ENCODE measurements at regions of chr9 and their contacts with region 1.

Region 1: GRCh38 chr9:34646211-34647083 is at the start of gene GALT:
- DNase-seq: peak; percentile 98
- ATAC-seq: peak; percentile 84
- H3K4me3 Mint-ChIP-seq: peak within 1 kb of the TSS; percentile 94
- H3K27ac Mint-ChIP-seq: peak within 1 kb of the TSS; percentile 91
- H3K4me1 Mint-ChIP-seq: peaks cover 17% of the 10 kb centered on the region
- H3K27me3 Mint-ChIP-seq: no peaks in the 10 kb centered on the region
- total RNA-seq, gene GALT: 119 to 127 TPM

Region 2: DNA sequence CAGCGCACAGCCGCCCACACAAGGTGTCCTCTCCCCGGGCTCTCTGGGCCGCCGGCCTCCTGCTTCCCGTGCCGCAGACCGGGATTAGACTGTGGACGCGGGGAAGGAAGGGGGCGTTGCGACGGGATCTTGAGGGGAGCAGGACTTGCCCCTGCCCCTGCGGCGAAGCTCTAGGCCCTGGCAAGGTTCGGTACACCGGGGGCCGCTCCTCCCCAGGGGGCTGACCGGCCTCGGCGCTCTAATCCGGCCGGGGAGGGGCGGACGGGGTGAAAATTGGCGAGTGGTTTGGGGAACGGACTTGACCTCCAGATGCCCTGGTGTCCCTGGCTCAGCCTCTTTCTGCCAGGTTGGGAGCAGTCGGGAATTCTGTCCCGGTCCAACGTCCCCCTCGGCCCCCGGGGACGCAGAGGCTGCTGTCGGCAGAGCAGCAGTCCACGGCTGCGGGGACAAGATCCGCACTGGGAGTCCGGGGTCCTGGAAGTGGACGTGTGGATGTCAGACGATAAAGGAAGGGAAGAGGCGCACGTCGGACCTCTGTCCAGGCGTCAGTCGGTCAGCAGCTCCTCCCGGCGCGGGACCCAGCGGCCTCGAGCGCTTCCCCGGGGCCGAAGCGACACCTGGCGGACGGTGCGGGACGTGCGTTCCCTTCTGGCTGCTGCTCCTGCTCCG is 55.1 kb before region 1 on chr9:
- POLR2A ChIA-PET with region 1: no interaction called
- DNase-seq: peak; percentile 89
- ATAC-seq: peak; percentile 70
- H3K4me3 Mint-ChIP-seq: peak overlapping the region; percentile 66
- H3K27ac Mint-ChIP-seq: no peak overlapping the region
- H3K4me1 Mint-ChIP-seq: peaks cover 20% of the 10 kb centered on the region
- H3K27me3 Mint-ChIP-seq: peaks cover 73% of the 10 kb centered on the region

Region 3: GRCh38 chr9:34620061-34620994 is 26.1 kb before region 1 on chr9 and contains the start of gene DCTN3:
- POLR2A ChIA-PET with region 1: interaction called, 17 read pairs
- DNase-seq: peak; percentile 83
- ATAC-seq: peak; percentile 98
- H3K4me3 Mint-ChIP-seq: peak within 1 kb of the TSS; percentile 94
- H3K27ac Mint-ChIP-seq: peak within 1 kb of the TSS; percentile 83
- H3K4me1 Mint-ChIP-seq: peaks cover 20% of the 10 kb centered on the region
- H3K27me3 Mint-ChIP-seq: peaks cover 31% of the 10 kb centered on the region
- total RNA-seq, gene DCTN3: 121 to 122 TPM

Region 4: GRCh38 chr9:34659592-34660535 is 13.4 kb after region 1 on chr9:
- POLR2A ChIA-PET with region 1: interaction called, 47 read pairs
- DNase-seq: no peak
- ATAC-seq: no peak
- H3K4me3 Mint-ChIP-seq: no peak overlapping the region
- H3K27ac Mint-ChIP-seq: no peak overlapping the region
- H3K4me1 Mint-ChIP-seq: peaks cover 27% of the 10 kb centered on the region
- H3K27me3 Mint-ChIP-seq: no peaks in the 10 kb centered on the region

Region 5: DNA sequence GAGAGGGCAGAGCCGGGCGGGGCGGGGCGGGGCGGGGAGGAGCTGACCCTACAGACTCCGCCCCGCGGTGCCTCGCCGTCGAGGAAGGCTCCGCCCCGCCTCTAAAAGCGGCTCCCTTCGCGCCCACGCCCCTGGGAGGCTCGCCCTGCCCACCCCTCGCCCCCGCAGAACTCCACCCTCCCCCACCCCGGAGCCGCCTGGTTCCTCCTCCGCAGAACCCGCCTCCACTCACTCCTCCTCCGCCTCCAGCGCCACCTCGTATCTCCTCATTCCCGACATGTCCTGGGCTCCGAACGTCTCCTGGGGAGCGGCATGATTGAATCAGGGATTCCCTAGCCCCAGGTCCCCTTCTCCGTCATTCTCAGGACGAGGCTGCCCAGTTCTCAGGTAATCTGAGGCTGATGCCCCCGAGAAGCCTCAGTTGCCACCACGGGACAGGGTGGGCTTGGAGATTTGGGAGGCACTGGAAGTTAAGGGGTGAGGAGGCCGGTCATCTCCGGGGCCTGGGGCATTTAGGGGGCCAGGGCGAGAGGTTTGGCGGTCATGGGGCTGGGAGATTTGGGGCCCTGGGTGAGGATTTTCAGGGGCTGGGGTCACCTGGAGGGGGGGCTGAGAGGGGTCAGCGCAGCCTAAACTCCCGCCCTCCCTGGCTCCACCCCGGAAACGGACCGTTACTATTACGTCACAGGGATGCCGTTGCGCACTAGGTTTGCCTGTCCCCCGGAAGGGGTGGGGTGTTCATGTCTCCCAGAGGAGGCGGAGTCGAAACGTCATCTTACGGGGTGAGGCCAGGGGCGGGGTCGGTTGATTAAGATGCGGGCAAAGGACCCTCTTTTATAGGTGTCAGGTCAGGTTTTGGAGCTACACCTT is 19.2 kb after region 1 on chr9:
- POLR2A ChIA-PET with region 1: interaction called, 47 read pairs
- DNase-seq: peak; percentile 85
- ATAC-seq: peak; percentile 73
- H3K4me3 Mint-ChIP-seq: peak overlapping the region; percentile 91
- H3K27ac Mint-ChIP-seq: peak overlapping the region; percentile 91
- H3K4me1 Mint-ChIP-seq: peaks cover 32% of the 10 kb centered on the region
- H3K27me3 Mint-ChIP-seq: no peaks in the 10 kb centered on the region

Measured in activated naive CD8-positive, alpha-beta T cell treated with anti-CD3 and anti-CD28 coated beads, Interleukin-2, amount 10 ng/mL, durations not matched to agents 7 days and 5 days (primary cell).